Heart left ventricle (tissue), 16 donors: ENCODE measurements at regions of chr2 and their contacts with region 1.

Region 1: DNA sequence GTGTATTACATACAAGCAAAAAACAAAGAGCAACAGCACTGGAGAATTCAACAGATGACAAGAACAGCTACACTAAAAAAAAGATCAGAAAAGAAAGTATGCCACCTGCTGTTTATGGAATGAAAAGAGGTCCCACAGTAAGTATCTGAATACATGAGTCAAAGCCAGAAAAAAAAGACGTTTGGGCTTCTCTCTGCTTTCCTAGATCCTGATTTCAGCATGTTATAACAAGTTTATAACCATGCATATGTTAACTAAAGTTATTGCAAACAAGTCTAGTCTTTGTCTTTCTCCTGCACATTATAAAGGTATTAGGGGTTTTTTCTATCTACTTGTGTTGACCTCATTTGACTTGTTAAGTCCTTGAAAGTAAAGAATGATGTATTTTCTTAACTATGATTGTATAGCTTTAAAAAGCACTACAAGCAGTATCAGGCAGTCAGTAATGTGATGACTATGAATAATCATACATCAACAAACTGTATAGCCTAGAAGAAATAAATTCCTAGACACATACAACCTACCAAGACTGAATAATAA is 108.5 kb upstream of the COL5A2 start:
- DNase-seq: no peak
- ATAC-seq: peak in 3 of 4 donors; percentile 44 to 66 (median 62)
- H3K4me3 ChIP-seq: no peak overlapping the region
- H3K27ac ChIP-seq: no peak overlapping the region
- H3K4me1 ChIP-seq: peaks cover 0 to 19% (median 0%) of the 10 kb centered on the region in 12 donors
- H3K27me3 ChIP-seq: no peaks in the 10 kb centered on the region
- CTCF ChIP-seq: peak in 10 of 12 donors; percentile 8 to 65 (median 52)
- POLR2A ChIP-seq: no peak

Region 2: DNA sequence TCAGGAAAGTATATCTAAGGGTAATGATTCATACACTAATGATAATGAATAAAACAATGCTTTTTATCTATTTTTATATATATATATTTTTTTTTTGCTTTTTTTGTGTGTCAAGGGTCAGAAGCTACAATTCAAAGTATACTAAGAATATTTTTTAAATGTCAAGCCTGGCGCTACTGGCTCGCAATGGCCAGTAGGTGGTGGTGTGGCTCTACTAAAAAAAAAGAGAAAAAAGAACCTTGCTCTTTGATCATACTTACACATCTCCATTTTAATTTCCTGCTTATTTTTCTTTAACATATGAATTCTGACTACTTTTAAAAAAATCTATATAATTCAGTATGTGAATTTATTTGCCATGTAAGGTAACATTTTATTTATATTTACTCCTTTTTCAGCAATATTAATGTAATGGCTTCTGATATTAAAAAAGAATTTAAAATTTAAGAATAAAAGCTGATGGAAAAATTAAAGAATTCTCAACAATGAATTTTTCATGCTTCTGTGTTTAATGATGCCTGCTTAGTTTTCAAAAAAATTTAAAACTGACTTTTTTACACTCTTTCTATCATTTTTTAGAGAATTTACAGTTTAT is 763.4 kb before region 1 on chr2:
- intact Hi-C with region 1: loop called in 4 of 10 experiments (anchors 5 to 10 kb)
- DNase-seq: no peak
- ATAC-seq: peak in 1 of 4 donors; percentile 72
- H3K4me3 ChIP-seq: no peak overlapping the region
- H3K27ac ChIP-seq: no peak overlapping the region
- H3K4me1 ChIP-seq: peaks cover 0 to 11% (median 0%) of the 10 kb centered on the region in 12 donors
- H3K27me3 ChIP-seq: no peaks in the 10 kb centered on the region
- CTCF ChIP-seq: peak; percentile 66 to 89 (median 80)
- POLR2A ChIP-seq: no peak

Region 3: GRCh38 chr2:189096769-189097447 is 191.1 kb before region 1 on chr2:
- intact Hi-C with region 1: loop called in 7 of 10 experiments (anchors 2 to 10 kb)
- DNase-seq: no peak
- ATAC-seq: no peak
- H3K4me3 ChIP-seq: no peak overlapping the region
- H3K27ac ChIP-seq: no peak overlapping the region
- H3K4me1 ChIP-seq: peaks cover 0 to 34% (median 5%) of the 10 kb centered on the region in 12 donors
- H3K27me3 ChIP-seq: no peaks in the 10 kb centered on the region
- CTCF ChIP-seq: no peak
- POLR2A ChIP-seq: no peak

Region 4: GRCh38 chr2:189109921-189110397 is 178.1 kb before region 1 on chr2:
- intact Hi-C with region 1: loop called in 4 of 10 experiments (anchors 5 to 10 kb)
- DNase-seq: no peak
- ATAC-seq: no peak
- H3K4me3 ChIP-seq: no peak overlapping the region
- H3K27ac ChIP-seq: no peak overlapping the region
- H3K4me1 ChIP-seq: peaks cover 0 to 5% (median 0%) of the 10 kb centered on the region in 12 donors
- H3K27me3 ChIP-seq: no peaks in the 10 kb centered on the region
- CTCF ChIP-seq: no peak
- POLR2A ChIP-seq: no peak

Region 5: DNA sequence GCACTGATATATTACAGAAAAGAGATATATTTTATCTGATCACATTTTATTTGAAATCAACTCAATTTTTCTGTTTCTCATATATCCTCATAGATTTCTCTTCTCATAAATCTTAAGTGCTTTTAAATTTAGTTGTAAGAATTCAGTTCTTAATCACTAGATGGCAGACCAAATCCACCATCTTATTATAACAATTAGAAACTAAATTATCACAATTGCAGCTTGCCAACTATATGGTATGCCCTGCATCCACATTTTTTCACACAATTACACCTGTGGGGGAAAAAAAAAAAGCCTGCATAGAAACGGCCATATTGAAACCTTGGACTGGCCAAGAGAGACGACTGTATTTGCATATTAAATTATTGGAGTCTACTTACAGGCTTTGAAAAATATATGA is 172.9 kb before region 1 on chr2:
- intact Hi-C with region 1: loop called in 4 of 10 experiments (anchors 5 to 10 kb)
- DNase-seq: no peak
- ATAC-seq: no peak
- H3K4me3 ChIP-seq: no peak overlapping the region
- H3K27ac ChIP-seq: no peak overlapping the region
- H3K4me1 ChIP-seq: peaks cover 0 to 15% (median 0%) of the 10 kb centered on the region in 12 donors
- H3K27me3 ChIP-seq: no peaks in the 10 kb centered on the region
- CTCF ChIP-seq: peak in 7 of 12 donors; percentile 16 to 46 (median 36)
- POLR2A ChIP-seq: no peak

Region 6: GRCh38 chr2:189179570-189179950 is 108.5 kb before region 1 on chr2 and contains the start of gene COL5A2:
- intact Hi-C with region 1: loop called in 2 of 10 experiments (anchors 10 kb)
- DNase-seq: peak; percentile 29 to 61 (median 37)
- ATAC-seq: peak; percentile 56 to 89 (median 89)
- H3K4me3 ChIP-seq: peak within 1 kb of the TSS; percentile 5 to 75 (median 54)
- H3K27ac ChIP-seq: peak within 1 kb of the TSS; percentile 48 to 83 (median 72)
- H3K4me1 ChIP-seq: peaks cover 0 to 6% (median 0%) of the 10 kb centered on the region in 12 donors
- H3K27me3 ChIP-seq: no peaks in the 10 kb centered on the region
- CTCF ChIP-seq: no peak
- POLR2A ChIP-seq: peak in 1 of 2 donors; percentile 27
- total RNA-seq, gene COL5A2: 7.2 to 61.1 (median 12.4) TPM